Dorsolateral prefrontal cortex (tissue), 120 donors: ENCODE measurements at regions of chr4 and their contacts with region 1.

Region 1: DNA sequence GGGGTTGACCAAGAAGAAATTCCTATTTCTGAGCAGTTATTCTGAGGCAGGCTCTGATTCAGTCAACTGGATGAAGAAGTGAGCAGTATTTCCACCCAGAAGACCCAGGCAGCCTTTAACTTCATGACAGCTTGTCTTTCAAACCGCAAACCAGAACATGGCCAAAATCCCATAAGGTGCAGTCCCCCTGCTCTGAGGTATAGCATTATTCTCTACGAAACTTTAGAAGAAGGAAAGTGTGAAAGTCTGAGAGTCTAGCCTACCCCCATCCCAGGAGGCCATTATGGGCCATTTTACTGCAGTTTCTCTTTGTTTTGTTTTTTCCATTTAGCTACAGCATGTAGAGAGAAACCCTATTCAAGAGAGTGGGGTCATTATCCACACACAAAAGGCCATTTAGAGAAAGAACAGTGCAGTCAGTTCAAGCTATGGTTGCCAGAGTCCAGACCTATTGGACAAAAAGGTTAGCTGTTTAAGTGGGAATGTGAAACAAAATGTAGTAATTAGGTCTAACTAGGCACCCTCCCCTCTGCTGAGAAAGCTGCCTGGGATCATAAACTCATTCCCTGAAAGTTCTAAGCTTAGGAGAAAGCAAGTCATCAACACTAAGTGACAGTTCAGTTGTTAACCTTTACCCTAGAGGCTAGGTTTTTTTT is 52.1 kb upstream of the RASGEF1B start:
- DNase-seq: no peak
- H3K4me3 ChIP-seq: peak overlapping the region in 12 of 59 donors; percentile 5 to 46 (median 14)
- H3K27ac ChIP-seq: peak overlapping the region in 55 of 59 donors; percentile 1 to 93 (median 72)
- H3K27me3 ChIP-seq: no peaks in the 10 kb centered on the region
- CTCF ChIP-seq: peak in 6 of 56 donors; percentile 4 to 22 (median 15)

Region 2: DNA sequence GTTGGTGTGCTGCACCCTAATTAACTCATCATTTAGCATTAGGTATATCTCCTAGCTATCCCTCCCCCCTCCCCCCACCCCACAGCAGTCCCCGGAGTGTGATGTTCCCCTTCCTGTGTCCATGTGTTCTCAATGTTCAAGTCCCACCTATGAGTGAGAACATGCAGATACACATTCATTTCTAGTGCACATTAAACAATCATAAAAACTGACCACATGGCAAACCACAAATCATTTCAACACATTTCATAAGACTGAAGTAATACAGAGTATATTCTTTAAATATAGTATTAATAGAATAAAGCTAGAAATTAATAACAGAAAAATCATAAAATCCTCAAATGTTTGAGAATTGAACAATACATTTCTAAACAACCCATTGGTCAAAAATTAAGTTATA is 342.9 kb before region 1 on chr4:
- intact Hi-C with region 1: no loop called
- DNase-seq: no peak
- H3K4me3 ChIP-seq: no peak overlapping the region
- H3K27ac ChIP-seq: no peak overlapping the region
- H3K27me3 ChIP-seq: no peaks in the 10 kb centered on the region
- CTCF ChIP-seq: no peak

Region 3: GRCh38 chr4:81454499-81454898 is 69.3 kb before region 1 on chr4:
- intact Hi-C with region 1: no loop called
- DNase-seq: no peak
- H3K4me3 ChIP-seq: no peak overlapping the region
- H3K27ac ChIP-seq: peak overlapping the region in 11 of 59 donors; percentile 13 to 63 (median 36)
- H3K27me3 ChIP-seq: no peaks in the 10 kb centered on the region
- CTCF ChIP-seq: no peak

Region 4: DNA sequence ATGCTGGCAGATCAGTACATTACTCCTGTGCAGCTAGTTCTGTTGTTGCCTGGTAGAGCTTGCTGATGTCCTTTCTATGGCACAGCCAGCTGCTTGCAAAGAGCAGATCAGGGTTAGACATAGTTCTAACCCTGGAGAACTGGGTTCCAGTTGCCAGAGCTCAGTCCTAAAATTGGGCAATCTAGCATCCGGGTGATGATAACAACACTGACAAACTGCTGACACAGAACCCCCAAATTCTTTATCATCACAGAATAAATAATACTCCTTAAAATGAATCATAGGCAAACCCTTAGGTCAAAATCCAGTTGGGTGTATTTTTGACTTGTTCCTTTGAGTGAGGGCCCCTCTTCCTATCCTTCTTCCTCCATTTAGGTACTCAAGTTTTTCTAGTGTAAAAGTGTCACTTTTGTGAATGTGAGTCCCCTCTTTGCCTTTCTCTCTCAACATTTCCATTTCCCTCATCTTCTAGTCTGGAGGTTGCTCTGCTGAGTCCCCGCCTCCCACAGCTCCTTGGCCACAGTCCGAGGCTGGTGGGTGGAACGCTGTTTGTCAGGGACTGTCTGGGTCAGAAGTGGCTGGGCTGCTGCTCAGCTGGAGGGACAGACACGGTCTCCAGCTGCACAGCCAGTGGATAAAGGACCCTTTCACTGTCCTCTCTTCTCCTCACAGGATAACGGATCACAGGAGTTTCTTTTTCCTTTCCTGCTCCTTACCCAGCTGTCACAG is 41.5 kb after region 1 on chr4:
- intact Hi-C with region 1: loop called in 1 of 2 experiments (anchors 5 kb)
- DNase-seq: peak; percentile 20 to 85 (median 76)
- H3K4me3 ChIP-seq: peak overlapping the region; percentile 3 to 67 (median 45)
- H3K27ac ChIP-seq: peak overlapping the region in 49 of 59 donors; percentile 3 to 77 (median 64)
- H3K27me3 ChIP-seq: no peaks in the 10 kb centered on the region
- CTCF ChIP-seq: peak in 3 of 56 donors; percentile 12 to 19 (median 14)